Prostate gland (tissue), 2 donors: ENCODE measurements at regions of chr12 and their contacts with region 1.

Region 1: GRCh38 chr12:54439521-54440255 is 20.6 kb upstream of the ITGA5 start:
- DNase-seq: no peak
- H3K4me3 ChIP-seq: no peak overlapping the region
- H3K27ac ChIP-seq: peak overlapping the region; percentile 5 to 6
- H3K4me1 ChIP-seq: peaks cover 6% of the 10 kb centered on the region
- H3K27me3 ChIP-seq: no peaks in the 10 kb centered on the region
- CTCF ChIP-seq: peak in 3 of 4 experiments; percentile 74 to 93 (median 84)
- POLR2A ChIP-seq: no peak

Region 2: GRCh38 chr12:54401119-54401518 is 38.6 kb before region 1 on chr12:
- intact Hi-C with region 1: loop called (anchors 2 kb)
- DNase-seq: no peak
- H3K4me3 ChIP-seq: no peak overlapping the region
- H3K27ac ChIP-seq: no peak overlapping the region
- H3K4me1 ChIP-seq: no peaks in the 10 kb centered on the region
- H3K27me3 ChIP-seq: no peaks in the 10 kb centered on the region
- CTCF ChIP-seq: no peak
- POLR2A ChIP-seq: no peak